ENCODE measurements at regions of chr11 and their contacts with region 1.

Region 1: DNA sequence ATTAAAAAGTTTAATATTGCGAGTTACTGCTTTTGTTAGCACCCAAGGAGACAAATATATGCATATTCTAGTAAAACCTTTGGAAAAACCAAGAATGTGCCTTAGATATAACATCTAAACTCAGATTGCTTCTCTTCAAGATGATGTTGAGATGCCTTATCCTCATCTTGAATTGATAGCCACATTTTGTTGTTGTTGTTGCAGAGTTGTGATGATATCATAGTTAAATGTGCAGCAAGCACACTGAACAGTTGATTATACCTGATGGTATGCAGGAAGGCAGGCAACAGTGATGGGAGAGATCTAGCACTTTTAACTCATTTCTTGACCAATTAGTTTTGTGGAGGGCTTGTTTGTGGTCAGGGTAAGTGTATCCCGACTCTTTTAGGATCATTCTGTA is 48.0 kb downstream of the KDM2A start:
- DNase-seq: no peak
- ATAC-seq: no peak
- H3K4me3 ChIP-seq: no peak overlapping the region
- H3K4me3 Mint-ChIP-seq: no peak overlapping the region
- H3K27ac ChIP-seq: no peak overlapping the region
- H3K27ac Mint-ChIP-seq: peak overlapping the region; percentile 1
- H3K4me1 ChIP-seq: no peaks in the 10 kb centered on the region
- H3K4me1 Mint-ChIP-seq: peaks cover 64% of the 10 kb centered on the region
- H3K27me3 ChIP-seq: no peaks in the 10 kb centered on the region
- H3K27me3 Mint-ChIP-seq: no peaks in the 10 kb centered on the region
- CTCF ChIP-seq: no peak

Region 2: GRCh38 chr11:67082035-67082791 is 84.9 kb before region 1 on chr11:
- CTCF ChIA-PET with region 1: interaction called, 21 read pairs
- POLR2A ChIA-PET with region 1: interaction called, 4 read pairs
- intact Hi-C with region 1: loop called (anchors 1 kb)
- DNase-seq: peak in 4 of 14 experiments; percentile 10 to 39 (median 21)
- ATAC-seq: peak; percentile 37
- H3K4me3 ChIP-seq: no peak overlapping the region
- H3K4me3 Mint-ChIP-seq: no peak overlapping the region
- H3K27ac ChIP-seq: no peak overlapping the region
- H3K27ac Mint-ChIP-seq: no peak overlapping the region
- H3K4me1 ChIP-seq: peaks cover 12% of the 10 kb centered on the region
- H3K4me1 Mint-ChIP-seq: peaks cover 11% of the 10 kb centered on the region
- H3K27me3 ChIP-seq: no peaks in the 10 kb centered on the region
- H3K27me3 Mint-ChIP-seq: peaks cover 11% of the 10 kb centered on the region
- CTCF ChIP-seq: no peak

Region 3: GRCh38 chr11:67099831-67100324 is 67.2 kb before region 1 on chr11:
- CTCF ChIA-PET with region 1: interaction called, 8 read pairs
- POLR2A ChIA-PET with region 1: no interaction called
- intact Hi-C with region 1: loop called in 1 of 2 experiments (anchors 5 kb)
- DNase-seq: no peak
- ATAC-seq: no peak
- H3K4me3 ChIP-seq: no peak overlapping the region
- H3K4me3 Mint-ChIP-seq: no peak overlapping the region
- H3K27ac ChIP-seq: no peak overlapping the region
- H3K27ac Mint-ChIP-seq: peak overlapping the region; percentile 73
- H3K4me1 ChIP-seq: peaks cover 25% of the 10 kb centered on the region
- H3K4me1 Mint-ChIP-seq: peaks cover 36% of the 10 kb centered on the region
- H3K27me3 ChIP-seq: no peaks in the 10 kb centered on the region
- H3K27me3 Mint-ChIP-seq: no peaks in the 10 kb centered on the region
- CTCF ChIP-seq: no peak

Region 4: GRCh38 chr11:67345920-67346799 is 179.1 kb after region 1 on chr11:
- CTCF ChIA-PET with region 1: no interaction called
- POLR2A ChIA-PET with region 1: no interaction called
- intact Hi-C with region 1: no loop called
- DNase-seq: peak in 4 of 14 experiments; percentile 39 to 65 (median 55)
- ATAC-seq: peak; percentile 71
- H3K4me3 ChIP-seq: no peak overlapping the region
- H3K4me3 Mint-ChIP-seq: peak overlapping the region; percentile 57
- H3K27ac ChIP-seq: peak overlapping the region in 1 of 2 donors; percentile 18
- H3K27ac Mint-ChIP-seq: peak overlapping the region; percentile 78
- H3K4me1 ChIP-seq: peaks cover 40% of the 10 kb centered on the region
- H3K4me1 Mint-ChIP-seq: peaks cover 63% of the 10 kb centered on the region
- H3K27me3 ChIP-seq: no peaks in the 10 kb centered on the region
- H3K27me3 Mint-ChIP-seq: no peaks in the 10 kb centered on the region
- CTCF ChIP-seq: peak; percentile 81

Measured in CD4-positive, alpha-beta T cell (primary cell).